HEK293 (cell line): ENCODE measurements at regions of chr18 and their contacts with region 1.

Region 1: DNA sequence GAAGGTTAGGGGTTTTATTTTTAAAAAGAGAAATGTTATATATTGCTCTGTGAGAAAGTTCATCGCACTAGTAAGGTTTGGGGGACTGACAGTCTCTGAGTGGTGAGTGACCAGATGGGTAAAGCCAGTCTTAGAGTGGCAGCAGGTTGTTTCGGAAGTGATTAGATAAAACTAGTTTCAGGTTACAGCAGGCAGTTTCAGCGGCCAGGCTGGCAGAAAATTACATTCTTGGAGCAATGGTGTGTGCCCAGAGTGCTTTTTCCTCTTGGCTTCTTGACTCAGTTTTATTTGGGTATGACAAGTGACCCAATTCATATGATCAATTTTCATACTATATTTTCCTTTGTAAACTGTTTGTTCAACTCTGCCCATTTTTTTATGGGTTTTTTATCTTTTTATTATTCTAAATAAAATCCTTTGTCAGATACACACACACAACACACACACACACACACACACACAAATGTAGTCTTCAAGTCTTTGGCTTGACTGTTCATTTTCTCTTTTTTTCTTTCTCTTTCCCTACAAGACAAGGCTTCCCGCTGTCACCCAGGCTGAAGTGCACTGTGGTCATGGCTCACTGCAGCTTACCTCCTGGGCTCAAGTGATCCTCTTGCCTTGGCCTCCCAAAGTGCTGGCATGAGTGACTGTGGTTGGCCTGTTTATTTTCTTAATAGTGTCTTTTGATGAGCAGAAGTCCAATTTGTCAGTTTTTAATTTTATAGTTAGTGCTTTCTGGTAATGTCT is 30.9 kb downstream of the RALBP1 start:
- H3K4me3 ChIP-seq: no peak overlapping the region
- H3K27ac ChIP-seq: peak overlapping the region; percentile 21; the same call in 1 of the 2 replicates
- H3K4me1 ChIP-seq: peaks cover 31% of the 10 kb centered on the region
- CTCF ChIP-seq: no peak

Region 2: DNA sequence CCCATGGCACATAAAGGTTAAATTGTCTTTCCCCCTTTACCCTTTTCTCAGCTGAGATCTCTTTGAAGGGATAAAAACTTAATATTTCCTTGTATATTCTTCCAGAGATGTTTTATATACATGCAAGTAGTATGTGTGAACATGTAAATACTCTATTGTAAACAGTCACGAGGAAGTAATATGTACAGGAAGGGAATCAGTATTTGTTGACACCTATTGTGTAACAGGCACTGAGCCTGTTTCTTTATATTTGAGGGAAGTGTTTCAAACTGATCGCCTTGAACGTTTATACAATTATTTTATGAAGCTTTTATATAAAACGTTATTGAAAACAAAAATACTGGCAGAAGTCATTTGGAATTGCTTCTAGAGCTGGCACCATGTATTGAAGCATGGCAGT is 17.7 kb before region 1 on chr18:
- CTCF ChIA-PET with region 1: no interaction called
- POLR2A ChIA-PET with region 1: no interaction called
- H3K4me3 ChIP-seq: no peak overlapping the region
- H3K27ac ChIP-seq: no peak overlapping the region
- H3K4me1 ChIP-seq: no peaks in the 10 kb centered on the region
- CTCF ChIP-seq: no peak

Region 3: DNA sequence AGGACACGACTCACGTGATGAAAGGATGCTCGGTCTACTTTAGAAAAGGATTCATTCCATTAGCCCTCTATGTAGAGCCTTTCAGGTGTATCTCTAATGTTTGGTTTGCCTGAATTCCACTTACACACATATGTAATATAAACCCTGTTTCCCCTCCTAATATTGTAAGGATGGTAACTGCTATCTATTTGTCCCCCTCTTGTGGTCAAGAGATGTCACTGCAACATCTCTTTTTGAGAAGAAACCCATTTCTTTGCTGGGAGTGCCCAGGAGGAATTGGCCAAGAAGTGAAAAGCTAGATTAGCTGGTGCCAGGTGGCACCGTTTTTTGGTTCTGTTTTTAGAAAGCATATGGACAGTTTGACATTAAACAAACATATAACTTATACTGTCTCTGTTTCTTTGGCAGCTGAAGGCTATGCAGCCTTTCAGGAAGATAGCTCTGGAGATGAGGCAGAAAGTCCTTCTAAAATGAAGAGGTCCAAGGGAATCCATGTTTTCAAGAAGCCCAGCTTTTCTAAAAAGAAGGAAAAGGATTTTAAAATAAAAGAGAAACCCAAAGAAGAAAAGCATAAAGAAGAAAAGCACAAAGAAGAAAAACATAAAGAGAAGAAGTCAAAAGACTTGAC is 10.3 kb after region 1 on chr18:
- CTCF ChIA-PET with region 1: interaction called, 24 read pairs
- POLR2A ChIA-PET with region 1: no interaction called
- H3K4me3 ChIP-seq: no peak overlapping the region
- H3K27ac ChIP-seq: no peak overlapping the region
- H3K4me1 ChIP-seq: no peaks in the 10 kb centered on the region
- CTCF ChIP-seq: peak; percentile 43; the same call in 1 of the 2 replicates